Activated CD4-positive, alpha-beta T cell treated with anti-CD3 and anti-CD28 coated beads for 36 hours (primary cell): ENCODE measurements at regions of chr12 and their contacts with region 1.

Region 1: GRCh38 chr12:69738351-69739286 is at the start of gene RAB3IP:
- DNase-seq: peak; percentile 97
- ATAC-seq: peak; percentile 88
- H3K4me3 Mint-ChIP-seq: peak within 1 kb of the TSS; percentile 79
- H3K27ac Mint-ChIP-seq: peak within 1 kb of the TSS; percentile 75
- H3K4me1 Mint-ChIP-seq: peaks cover 26% of the 10 kb centered on the region
- H3K27me3 Mint-ChIP-seq: peaks cover 10% of the 10 kb centered on the region
- total RNA-seq, gene RAB3IP: 30.7 to 39.9 TPM

Region 2: DNA sequence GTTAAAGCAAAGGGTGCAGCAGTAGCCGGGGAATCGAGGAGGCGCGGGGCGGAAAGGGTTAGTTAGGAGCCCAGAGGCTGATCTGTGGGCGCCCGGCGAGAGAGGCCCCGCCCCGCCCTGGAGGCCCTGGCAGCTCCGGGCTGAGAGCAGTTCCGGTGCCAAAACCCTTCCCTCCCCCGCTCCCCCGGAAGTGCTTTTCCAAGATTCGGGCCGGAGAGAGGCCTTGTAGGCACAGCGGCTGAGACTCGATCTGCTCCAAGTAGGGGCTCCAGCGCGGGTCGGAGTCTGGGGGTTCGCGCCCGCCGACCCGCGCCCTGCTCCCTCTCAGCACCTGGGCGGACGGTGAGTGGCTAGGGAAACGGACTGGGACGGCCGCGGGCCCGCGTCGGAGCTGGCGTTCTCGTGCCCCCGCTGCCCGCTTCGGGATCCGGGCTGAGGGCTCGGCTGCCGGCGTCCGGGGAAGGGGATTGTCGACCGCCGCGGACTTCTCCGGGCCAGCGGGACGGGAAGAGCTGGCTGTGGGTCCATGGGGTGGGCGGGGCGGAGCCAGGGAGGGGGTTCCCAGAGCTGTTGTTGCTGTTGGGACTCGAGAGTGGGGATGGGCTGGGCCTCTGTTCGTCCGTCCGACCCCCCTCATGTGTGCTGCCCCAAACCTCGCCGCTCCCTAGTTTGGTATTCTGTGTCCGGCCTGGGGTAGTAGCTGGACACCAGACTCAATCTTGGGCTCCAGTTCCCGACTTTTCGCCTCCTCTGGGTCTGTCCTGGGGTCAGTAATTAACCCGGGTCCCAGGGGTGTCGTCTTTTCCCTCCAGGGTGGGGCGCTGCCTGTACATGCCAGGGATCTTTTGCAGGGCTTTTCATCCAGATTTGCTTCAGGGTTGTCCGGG is 268.2 kb before region 1 on chr12 and contains the start of gene FRS2:
- CTCF ChIA-PET with region 1: no interaction called
- POLR2A ChIA-PET with region 1: no interaction called
- intact Hi-C with region 1: loop called in 1 of 2 experiments (anchors 1 kb)
- DNase-seq: peak; percentile 93
- ATAC-seq: peak; percentile 99
- H3K4me3 Mint-ChIP-seq: peak within 1 kb of the TSS; percentile 92
- H3K27ac Mint-ChIP-seq: peak within 1 kb of the TSS; percentile 99
- H3K4me1 Mint-ChIP-seq: peaks cover 52% of the 10 kb centered on the region
- H3K27me3 Mint-ChIP-seq: no peaks in the 10 kb centered on the region
- total RNA-seq, gene FRS2: 9.5 to 10.4 TPM

Region 3: DNA sequence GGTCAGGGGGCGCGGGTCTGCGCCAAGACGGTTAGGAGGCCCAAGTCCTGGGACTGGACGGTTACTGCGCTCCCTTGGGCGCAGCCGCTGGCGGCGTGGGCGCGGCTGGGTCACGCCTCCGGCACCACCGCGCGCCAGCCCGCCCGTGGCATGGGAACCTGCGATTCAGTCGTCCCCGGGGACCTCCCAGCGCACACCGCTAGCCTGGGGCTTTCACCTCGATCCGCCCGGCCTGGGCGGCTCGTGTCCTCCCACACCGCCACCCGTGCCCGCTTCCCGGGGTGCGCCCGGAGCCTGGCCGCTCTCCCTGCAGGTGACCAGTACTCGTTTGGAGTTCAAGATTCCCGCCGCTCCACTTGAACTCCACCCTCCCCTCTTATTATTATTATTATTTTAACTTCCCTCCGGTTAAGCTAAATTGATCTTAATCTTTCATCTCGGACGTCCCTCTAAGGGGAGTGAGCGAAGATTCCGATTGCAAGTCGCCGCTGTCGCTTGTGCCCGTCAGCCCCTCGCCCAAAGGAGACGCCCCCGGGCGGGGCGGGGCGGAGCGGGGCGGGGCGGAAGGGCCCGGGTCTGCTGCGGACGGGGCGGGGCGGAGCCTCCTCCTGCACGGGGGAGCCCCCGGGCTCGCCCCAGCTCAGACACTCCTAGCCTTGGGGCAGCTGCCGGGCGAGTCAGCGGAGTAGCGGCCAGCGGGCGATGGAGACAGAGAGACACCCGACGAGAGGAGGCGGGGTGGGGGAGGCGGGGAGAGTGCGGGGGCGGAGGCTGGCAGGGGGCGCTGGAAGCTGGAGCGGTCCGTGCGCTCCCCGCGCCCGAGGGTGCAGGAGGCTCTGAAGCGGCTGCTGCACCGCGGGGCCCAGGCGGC is 627.3 kb after region 1 on chr12 and contains the start of gene KCNMB4:
- CTCF ChIA-PET with region 1: no interaction called
- POLR2A ChIA-PET with region 1: no interaction called
- intact Hi-C with region 1: loop called in 1 of 2 experiments (anchors 2 kb)
- DNase-seq: peak; percentile 88
- ATAC-seq: peak; percentile 91
- H3K4me3 Mint-ChIP-seq: peak within 1 kb of the TSS; percentile 86
- H3K27ac Mint-ChIP-seq: peak within 1 kb of the TSS; percentile 34
- H3K4me1 Mint-ChIP-seq: peaks cover 17% of the 10 kb centered on the region
- H3K27me3 Mint-ChIP-seq: peaks cover 6% of the 10 kb centered on the region
- total RNA-seq, gene KCNMB4: 0.94 to 2.1 TPM